H1 (cell line): ENCODE measurements at regions of chr7 and their contacts with region 1.

Region 1: DNA sequence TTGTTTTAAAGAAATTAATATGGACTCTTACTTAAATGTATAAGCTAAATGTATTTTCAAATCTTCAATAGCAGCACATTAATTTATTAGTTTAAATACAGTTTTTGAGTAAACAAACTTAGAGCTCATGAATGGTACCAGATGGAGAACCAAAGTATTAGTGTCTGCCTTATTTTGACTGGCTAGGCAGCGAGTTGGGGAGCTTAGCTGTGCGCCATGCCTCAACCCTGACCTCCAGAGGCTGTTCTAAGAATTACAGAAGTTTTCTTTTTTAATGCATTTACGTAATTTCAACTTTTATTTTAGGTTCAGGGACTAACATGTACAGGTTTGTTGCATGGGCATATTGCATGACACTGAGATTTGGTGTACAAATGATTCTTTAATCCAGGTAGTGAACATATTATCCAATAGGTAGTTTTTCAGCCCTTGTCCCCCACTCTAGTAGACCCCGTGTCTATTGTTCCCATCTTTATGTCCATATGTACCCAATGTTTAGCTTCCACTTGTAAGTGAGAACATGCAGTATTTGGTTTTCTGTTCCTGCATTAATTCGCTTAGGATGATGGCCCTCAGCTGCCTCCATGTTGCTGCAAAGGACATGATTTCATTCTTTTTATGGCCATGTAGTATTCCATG is 166.8 kb downstream of the IQUB start:
- DNase-seq: no peak
- H3K4me3 ChIP-seq: no peak overlapping the region
- H3K27ac ChIP-seq: no peak overlapping the region
- H3K4me1 ChIP-seq: no peaks in the 10 kb centered on the region
- H3K27me3 ChIP-seq: no peaks in the 10 kb centered on the region
- CTCF ChIP-seq: peak; percentile 57 to 76 (median 64)
- EP300 ChIP-seq: no peak
- POLR2A ChIP-seq: no peak
- RAD21 ChIP-seq: peak; percentile 88 to 90

Region 2: GRCh38 chr7:123154231-123154860 is 213.3 kb before region 1 on chr7:
- CTCF ChIA-PET with region 1: interaction called, 13 read pairs
- POLR2A ChIA-PET with region 1: no interaction called
- DNase-seq: peak; percentile 34 to 81
- H3K4me3 ChIP-seq: no peak overlapping the region
- H3K27ac ChIP-seq: no peak overlapping the region
- H3K4me1 ChIP-seq: 0 out of 7 replicates have a peak, but pooled peaks cover 0 to 1% (median 0%) of the 10 kb centered on the region in 4 experiments
- H3K27me3 ChIP-seq: no peaks in the 10 kb centered on the region
- CTCF ChIP-seq: peak; percentile 27 to 85 (median 74)
- EP300 ChIP-seq: no peak
- POLR2A ChIP-seq: no peak
- RAD21 ChIP-seq: peak; percentile 91

Region 3: DNA sequence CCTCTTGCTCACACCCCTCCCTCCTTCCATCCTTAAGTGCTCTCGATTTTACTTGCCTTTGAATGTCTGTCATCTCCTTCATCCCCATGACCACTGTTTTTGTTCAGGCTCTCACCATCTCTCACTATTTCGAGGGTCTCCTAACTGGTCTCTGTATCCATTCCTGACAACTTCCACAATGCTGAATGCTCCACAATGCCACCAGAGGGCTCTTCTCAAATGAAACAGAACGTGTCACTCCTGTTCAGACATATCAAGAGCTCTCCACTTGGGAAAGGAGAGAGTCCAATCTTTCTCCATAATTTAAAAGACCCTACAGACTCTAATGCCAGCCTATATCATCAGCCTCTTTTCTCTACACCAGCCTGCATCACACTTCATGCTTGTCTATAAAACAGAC is 158.8 kb before region 1 on chr7:
- CTCF ChIA-PET with region 1: interaction called, 42 read pairs
- POLR2A ChIA-PET with region 1: no interaction called
- DNase-seq: no peak
- H3K4me3 ChIP-seq: no peak overlapping the region
- H3K27ac ChIP-seq: no peak overlapping the region
- H3K4me1 ChIP-seq: no peaks in the 10 kb centered on the region
- H3K27me3 ChIP-seq: no peaks in the 10 kb centered on the region
- CTCF ChIP-seq: peak in 2 of 3 experiments; percentile 48 to 52; a peak in 3 of 4 replicates
- EP300 ChIP-seq: no peak
- POLR2A ChIP-seq: no peak
- RAD21 ChIP-seq: peak; percentile 47 to 59

Region 4: GRCh38 chr7:123285076-123285732 is 82.4 kb before region 1 on chr7:
- CTCF ChIA-PET with region 1: interaction called, 12 read pairs
- POLR2A ChIA-PET with region 1: no interaction called
- DNase-seq: peak; percentile 38 to 59
- H3K4me3 ChIP-seq: no peak overlapping the region; a peak in 1 of 8 replicates
- H3K27ac ChIP-seq: peak overlapping the region; percentile 59; the same call in 1 of the 2 replicates
- H3K4me1 ChIP-seq: no peaks in the 10 kb centered on the region
- H3K27me3 ChIP-seq: no peaks in the 10 kb centered on the region
- CTCF ChIP-seq: peak; percentile 44 to 54 (median 48)
- EP300 ChIP-seq: no peak
- POLR2A ChIP-seq: no peak
- RAD21 ChIP-seq: peak; percentile 22 to 42; a peak in 3 of 4 replicates

Region 5: GRCh38 chr7:123355576-123356195 is 11.9 kb before region 1 on chr7:
- CTCF ChIA-PET with region 1: interaction called, 37 read pairs
- POLR2A ChIA-PET with region 1: no interaction called
- DNase-seq: no peak
- H3K4me3 ChIP-seq: no peak overlapping the region
- H3K27ac ChIP-seq: no peak overlapping the region
- H3K4me1 ChIP-seq: peaks cover 0 to 5% (median 2%) of the 10 kb centered on the region in 4 experiments; a peak in 3 of 7 replicates
- H3K27me3 ChIP-seq: no peaks in the 10 kb centered on the region
- CTCF ChIP-seq: peak in 2 of 3 experiments; percentile 7 to 33; a peak in 2 of 4 replicates
- EP300 ChIP-seq: no peak
- POLR2A ChIP-seq: no peak
- RAD21 ChIP-seq: peak in 1 of 2 experiments; percentile 19; a peak in 1 of 4 replicates